Activated T-helper 1 cell treated with anti-CD3 and anti-CD28 coated beads, Interleukin-12 subunit alpha, Interleukin-12 subunit beta, Interleukin-2, Interleukin-4 antibody, amounts not matched to agents 30 ng/mL and 10 ng/mL and 1 ng/mL, durations not matched to agents 14 hours and 24 hours and 36 hours (primary cell): ENCODE measurements at regions of chr9 and their contacts with region 1.

Region 1: GRCh38 chr9:127970401-127971313 is 10.1 kb downstream of the EEIG1 start:
- DNase-seq: peak; percentile 74
- H3K4me3 Mint-ChIP-seq: peak overlapping the region; percentile 69
- H3K27ac Mint-ChIP-seq: peak overlapping the region; percentile 87
- H3K4me1 Mint-ChIP-seq: peaks cover 91% of the 10 kb centered on the region
- H3K27me3 Mint-ChIP-seq: no peaks in the 10 kb centered on the region

Region 2: DNA sequence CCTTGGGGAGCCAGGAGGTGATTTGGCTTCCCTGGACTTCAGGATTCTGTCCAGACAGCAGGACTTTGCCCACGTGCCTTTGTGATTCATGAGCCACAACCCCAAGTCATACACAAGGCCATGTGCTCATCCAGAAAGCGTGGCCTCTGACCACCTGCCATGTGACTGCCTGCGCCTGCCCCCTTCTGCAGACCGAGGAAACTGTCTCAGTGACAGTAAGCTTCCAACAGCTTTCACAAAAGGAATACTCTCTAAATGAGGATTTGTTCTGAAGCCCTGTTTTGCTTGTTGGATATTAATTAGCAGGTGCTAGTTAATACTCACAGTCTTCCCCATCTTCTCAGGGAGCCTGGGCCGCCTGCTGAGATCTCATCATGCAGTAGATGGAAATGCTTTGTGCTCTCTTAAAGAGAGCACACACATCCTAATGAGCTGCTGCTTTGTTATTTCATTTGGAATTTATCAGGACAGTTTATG is 811.3 kb before region 1 on chr9:
- intact Hi-C with region 1: no loop called
- DNase-seq: no peak
- H3K4me3 Mint-ChIP-seq: no peak overlapping the region
- H3K27ac Mint-ChIP-seq: no peak overlapping the region
- H3K4me1 Mint-ChIP-seq: peaks cover 44% of the 10 kb centered on the region
- H3K27me3 Mint-ChIP-seq: peaks cover 11% of the 10 kb centered on the region

Region 3: DNA sequence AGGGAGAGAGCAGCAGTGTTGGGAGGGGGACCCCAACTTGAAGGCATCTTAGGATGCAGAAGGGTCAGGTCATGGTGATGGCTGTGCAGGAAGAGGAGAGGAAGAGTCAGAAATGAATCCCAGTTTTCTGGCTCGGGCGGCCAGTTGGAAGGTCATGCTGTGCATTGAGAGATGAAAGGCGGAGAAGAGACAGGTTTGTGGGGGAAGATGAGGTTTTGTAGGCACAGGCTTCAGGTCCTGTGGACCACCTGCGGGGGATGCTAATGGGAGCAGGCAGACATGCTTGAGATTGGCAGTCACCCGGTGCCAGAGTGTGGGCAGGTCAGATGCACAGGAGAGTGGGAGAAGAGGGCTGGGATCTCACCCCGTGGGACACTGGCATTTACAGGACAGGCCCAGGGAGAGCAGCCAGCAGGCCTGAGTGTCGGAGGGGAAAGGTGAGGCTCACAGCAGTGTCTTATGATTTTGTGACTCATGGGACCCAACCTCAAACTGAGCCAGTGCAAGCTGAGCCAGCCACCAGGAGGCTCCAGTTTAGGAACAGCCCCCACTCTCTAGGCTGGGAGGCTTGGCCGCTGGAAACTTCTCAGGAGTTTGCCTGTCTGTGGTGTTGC is 341.1 kb before region 1 on chr9:
- intact Hi-C with region 1: no loop called
- DNase-seq: no peak
- H3K4me3 Mint-ChIP-seq: no peak overlapping the region
- H3K27ac Mint-ChIP-seq: peak overlapping the region; percentile 63
- H3K4me1 Mint-ChIP-seq: peaks cover 26% of the 10 kb centered on the region
- H3K27me3 Mint-ChIP-seq: peaks cover 4% of the 10 kb centered on the region

Region 4: DNA sequence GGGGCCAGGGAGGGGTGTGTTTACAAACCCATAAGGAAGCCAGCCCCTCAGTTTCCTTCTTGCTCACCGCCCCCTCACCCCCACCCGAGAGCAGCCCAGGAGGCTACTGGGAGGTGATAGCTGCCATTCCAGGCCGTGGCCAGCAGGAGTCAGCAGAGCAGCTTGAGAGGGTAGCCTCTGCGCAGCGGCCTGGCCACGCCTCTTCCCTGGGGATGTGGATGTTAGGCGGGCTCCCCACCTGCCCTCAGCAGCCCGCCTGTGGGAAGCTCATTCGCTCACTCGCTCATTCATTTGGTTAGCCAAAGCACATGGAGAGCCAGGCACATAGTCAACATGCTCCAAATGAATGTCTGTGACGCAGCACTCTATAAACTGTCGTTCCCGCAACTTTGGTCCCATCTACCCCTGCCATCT is 26.9 kb before region 1 on chr9:
- intact Hi-C with region 1: loop called (anchors 1 kb)
- DNase-seq: peak; percentile 65
- H3K4me3 Mint-ChIP-seq: no peak overlapping the region
- H3K27ac Mint-ChIP-seq: no peak overlapping the region
- H3K4me1 Mint-ChIP-seq: peaks cover 14% of the 10 kb centered on the region
- H3K27me3 Mint-ChIP-seq: peaks cover 2% of the 10 kb centered on the region

Region 5: DNA sequence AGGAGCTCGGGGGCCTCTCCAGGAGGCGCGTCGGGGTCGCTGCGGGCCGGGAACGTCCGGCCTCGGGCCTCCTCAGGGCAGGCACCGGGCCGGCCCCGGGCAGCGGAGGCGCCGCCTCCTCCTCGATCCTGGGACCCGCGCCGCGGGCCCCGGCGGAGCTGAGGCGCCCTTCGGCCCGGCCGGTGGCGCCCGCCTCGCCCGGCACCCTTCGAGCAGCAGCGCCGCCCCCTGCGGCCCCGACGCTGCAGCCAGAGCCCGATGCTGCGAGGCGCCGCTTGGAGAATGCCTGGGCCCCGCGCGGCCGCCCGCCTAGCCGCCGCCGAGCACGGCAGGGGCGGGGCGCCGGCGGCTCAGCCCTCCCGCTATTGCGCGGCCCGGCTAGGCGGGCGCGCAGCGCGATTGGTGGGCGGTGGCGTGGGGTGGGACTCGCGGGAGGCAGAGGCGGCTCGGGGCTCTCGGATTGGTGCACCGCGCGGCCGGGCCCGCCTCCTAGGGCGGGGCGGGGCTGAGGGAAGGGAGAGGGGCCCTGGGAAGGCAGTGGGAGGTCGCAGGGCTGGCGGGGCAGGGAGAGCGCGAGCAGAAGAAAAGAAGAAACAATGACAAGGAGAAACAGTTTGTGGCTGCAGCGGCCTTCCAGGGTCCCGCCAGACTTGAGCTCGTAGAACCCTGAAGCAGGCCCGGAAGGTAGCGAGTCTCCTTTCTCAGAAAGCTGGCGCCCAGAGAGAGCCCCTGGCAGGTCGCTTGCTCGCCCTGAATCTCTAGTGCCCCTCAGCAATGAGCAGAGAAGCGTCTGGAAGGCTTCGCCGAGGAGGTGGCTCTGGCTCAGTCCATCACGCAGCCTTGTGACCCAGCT is 10.3 kb after region 1 on chr9 and contains the start of gene EEIG1:
- intact Hi-C with region 1: loop called (anchors 1 kb)
- DNase-seq: peak; percentile 98
- H3K4me3 Mint-ChIP-seq: peak within 1 kb of the TSS; percentile 93
- H3K27ac Mint-ChIP-seq: peak within 1 kb of the TSS; percentile 84
- H3K4me1 Mint-ChIP-seq: peaks cover 48% of the 10 kb centered on the region
- H3K27me3 Mint-ChIP-seq: no peaks in the 10 kb centered on the region
- total RNA-seq, gene EEIG1: 39.8 and 43.4 TPM in 2 replicates

Region 6: DNA sequence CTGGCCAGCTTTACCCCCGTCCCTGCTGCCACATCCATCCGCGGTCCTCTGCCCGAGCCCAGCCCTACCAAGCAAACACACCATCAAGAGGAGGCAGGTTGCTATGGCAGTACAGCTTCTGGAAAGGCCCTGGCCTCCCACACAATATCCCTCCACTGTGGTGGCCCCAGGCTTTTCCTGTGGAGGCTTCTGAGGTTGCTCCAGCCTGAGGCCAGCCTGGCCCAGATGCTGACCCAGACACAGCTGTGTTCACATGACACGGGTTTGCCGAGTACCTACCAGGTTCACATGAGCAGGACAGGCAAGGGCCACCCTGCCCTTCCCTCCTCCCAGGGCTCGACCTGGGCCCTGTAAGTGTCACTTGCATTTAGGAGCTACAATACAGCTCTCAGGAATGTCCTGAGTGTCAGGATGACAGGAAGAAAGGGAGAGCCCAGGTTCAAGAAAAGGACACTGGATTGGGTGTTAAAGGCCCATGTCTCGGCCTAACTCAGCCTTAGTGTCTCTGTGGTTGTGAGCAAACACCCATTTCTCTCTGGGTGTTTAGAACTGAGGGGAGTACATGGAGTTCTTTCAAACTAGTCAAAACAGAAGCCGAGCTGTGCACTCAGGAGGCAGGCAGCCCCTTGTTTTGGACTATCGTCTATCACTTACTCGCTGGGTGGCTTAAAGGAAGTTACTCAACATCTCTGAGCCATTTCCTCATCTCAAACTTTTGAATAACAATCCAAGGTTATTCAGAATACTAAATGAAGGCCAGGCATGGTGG is 56.3 kb after region 1 on chr9:
- intact Hi-C with region 1: loop called (anchors 1 kb)
- DNase-seq: peak; percentile 37
- H3K4me3 Mint-ChIP-seq: peak overlapping the region; percentile 60
- H3K27ac Mint-ChIP-seq: peak overlapping the region; percentile 93
- H3K4me1 Mint-ChIP-seq: peaks cover 81% of the 10 kb centered on the region
- H3K27me3 Mint-ChIP-seq: peaks cover 4% of the 10 kb centered on the region

Region 7: DNA sequence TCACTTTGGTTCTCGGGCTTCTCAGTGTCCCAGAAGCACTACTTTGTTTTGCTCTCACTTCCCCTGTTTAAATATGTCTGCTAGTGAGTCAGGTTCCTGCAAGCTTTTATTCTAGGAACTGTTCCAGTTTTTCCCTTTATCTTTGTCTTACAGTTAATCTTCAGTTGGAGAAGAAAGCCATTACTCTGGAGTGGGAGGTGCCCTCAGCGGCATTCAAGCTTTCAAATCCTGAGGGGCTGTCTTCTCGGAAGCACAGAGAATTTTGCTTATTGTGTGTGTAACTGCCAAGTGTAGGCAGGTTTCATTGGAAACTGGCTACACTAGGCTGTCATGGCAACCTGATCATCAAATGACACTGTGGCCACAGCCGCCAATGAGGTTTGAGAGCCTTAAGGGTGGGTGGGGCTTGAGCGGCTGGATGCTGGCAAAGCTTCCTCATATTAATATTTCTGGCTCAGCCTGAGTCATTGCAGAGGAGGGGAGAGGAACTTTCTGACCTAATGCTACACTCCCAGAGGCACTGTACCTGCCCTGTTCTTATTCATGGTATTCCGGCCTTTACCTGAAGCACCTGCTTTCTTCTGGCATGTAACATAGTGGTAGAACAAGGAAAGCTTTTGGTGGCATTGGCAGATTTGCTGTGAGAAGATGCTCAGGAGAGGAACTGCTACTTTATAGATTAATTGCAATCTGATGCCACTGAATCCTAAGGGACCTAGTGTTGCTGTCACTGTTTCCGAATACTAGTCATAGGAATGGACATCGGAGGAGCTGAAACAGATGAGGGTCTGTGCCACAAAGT is 123.7 kb after region 1 on chr9:
- intact Hi-C with region 1: loop called (anchors 1 kb)
- DNase-seq: peak; percentile 79
- H3K4me3 Mint-ChIP-seq: peak overlapping the region; percentile 70
- H3K27ac Mint-ChIP-seq: peak overlapping the region; percentile 95
- H3K4me1 Mint-ChIP-seq: peaks cover 48% of the 10 kb centered on the region
- H3K27me3 Mint-ChIP-seq: no peaks in the 10 kb centered on the region